HEK293T (cell line): ENCODE measurements at regions of chr5 and their contacts with region 1.

Region 1: GRCh38 chr5:150801117-150801927 is 22.8 kb downstream of the SMIM3 start:
- DNase-seq: peak; percentile 66

Region 2: DNA sequence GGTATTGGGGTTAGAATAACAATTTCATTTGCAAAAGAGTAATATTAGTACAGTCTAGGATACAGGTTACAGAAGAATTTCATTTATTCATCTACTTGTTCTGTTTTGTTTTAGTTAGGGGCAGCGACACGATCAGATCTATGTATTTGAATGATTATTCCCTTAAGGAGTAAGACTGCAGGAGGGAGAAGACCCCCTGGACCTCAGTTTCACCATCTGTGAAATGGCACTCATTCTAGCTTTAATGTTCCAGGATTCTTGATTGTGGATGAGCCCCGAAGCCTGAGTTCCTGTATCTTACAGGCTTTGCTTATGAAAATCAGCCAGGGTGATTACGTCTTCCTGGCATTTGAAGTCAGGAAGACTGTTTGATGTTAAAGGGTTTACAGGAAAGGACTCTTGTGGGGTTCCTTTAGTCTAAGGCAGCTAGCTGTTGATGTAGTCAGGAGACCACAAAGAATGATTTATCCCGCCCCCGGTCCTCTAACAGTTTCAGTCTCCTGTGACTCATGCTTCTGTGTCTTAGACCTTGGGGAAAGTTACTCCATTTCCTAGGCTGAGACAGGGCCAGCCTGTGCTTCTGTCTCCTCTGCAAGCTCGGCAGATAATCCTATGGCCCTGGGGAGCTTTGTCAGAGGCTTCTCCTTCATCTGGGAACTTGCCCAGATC is 11.2 kb before region 1 on chr5:
- CTCF ChIA-PET with region 1: interaction called, 13 read pairs
- POLR2A ChIA-PET with region 1: interaction called, 3 read pairs
- DNase-seq: no peak

Region 3: GRCh38 chr5:150846654-150847333 is 45.5 kb after region 1 on chr5:
- CTCF ChIA-PET with region 1: interaction called, 25 read pairs
- POLR2A ChIA-PET with region 1: interaction called, 3 read pairs
- DNase-seq: peak; percentile 65